Right cardiac atrium (tissue), 5 donors: ENCODE measurements at regions of chr12 and their contacts with region 1.

Region 1: DNA sequence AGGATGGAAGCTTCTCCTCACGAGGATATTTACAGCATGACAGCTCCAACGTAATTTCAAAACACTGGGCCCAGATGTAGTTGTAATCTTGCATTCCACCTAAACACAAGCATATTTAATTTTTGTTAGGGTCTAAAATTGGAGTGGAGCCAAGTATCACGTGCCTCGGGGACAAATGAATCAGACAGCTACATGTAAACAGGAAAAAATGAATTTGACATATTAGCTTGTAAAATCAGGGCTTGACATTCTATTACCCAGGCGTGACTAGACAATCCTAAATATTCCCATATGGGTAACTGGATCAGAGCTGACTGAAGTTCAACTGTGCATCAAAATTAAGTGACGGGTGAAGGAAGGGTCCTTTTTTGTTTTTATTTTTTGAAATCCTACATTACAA is 59.0 kb downstream of the MDM2 start:
- DNase-seq: no peak
- ATAC-seq: no peak
- H3K4me3 ChIP-seq: no peak overlapping the region
- H3K27ac ChIP-seq: no peak overlapping the region
- H3K4me1 ChIP-seq: no peaks in the 10 kb centered on the region
- H3K27me3 ChIP-seq: no peaks in the 10 kb centered on the region

Region 2: DNA sequence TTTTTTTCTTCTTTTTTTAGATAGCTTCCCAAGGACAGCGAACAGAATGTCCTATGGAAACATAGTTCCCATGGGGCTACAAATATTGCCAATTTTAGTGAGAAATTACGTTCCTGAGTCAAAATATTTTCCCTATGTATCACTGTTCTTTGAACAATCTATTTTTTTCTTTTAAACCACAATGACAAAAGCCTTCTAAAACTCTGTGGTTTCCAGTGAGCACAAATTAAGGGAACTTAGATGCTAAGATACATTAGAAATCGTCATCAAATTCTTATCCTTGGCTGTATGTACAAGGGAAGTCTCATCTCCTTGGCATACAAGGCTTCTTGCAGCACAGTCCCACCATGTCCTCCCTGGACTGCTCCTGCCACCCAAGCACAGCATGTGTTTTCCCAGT is 48.1 kb after region 1 on chr12:
- intact Hi-C with region 1: no loop called
- DNase-seq: no peak
- ATAC-seq: peak in 1 of 2 donors; percentile 31
- H3K4me3 ChIP-seq: no peak overlapping the region
- H3K27ac ChIP-seq: peak overlapping the region; percentile 35
- H3K4me1 ChIP-seq: peaks cover 2% of the 10 kb centered on the region
- H3K27me3 ChIP-seq: no peaks in the 10 kb centered on the region

Region 3: GRCh38 chr12:69059483-69060457 is 192.8 kb after region 1 on chr12:
- intact Hi-C with region 1: loop called in 2 of 4 experiments (anchors 10 kb)
- DNase-seq: no peak
- ATAC-seq: no peak
- H3K4me3 ChIP-seq: no peak overlapping the region
- H3K27ac ChIP-seq: no peak overlapping the region
- H3K4me1 ChIP-seq: peaks cover 2% of the 10 kb centered on the region
- H3K27me3 ChIP-seq: no peaks in the 10 kb centered on the region

Region 4: GRCh38 chr12:69070319-69071090 is 203.6 kb after region 1 on chr12:
- intact Hi-C with region 1: loop called (anchors 5 to 10 kb)
- DNase-seq: peak in 2 of 3 donors; percentile 42 to 64
- ATAC-seq: peak; percentile 79 to 81
- H3K4me3 ChIP-seq: no peak overlapping the region
- H3K27ac ChIP-seq: no peak overlapping the region
- H3K4me1 ChIP-seq: peaks cover 4% of the 10 kb centered on the region
- H3K27me3 ChIP-seq: peaks cover 3% of the 10 kb centered on the region